OCI-LY7 (cell line): ENCODE measurements at regions of chr7 and their contacts with region 1.

Region 1: DNA sequence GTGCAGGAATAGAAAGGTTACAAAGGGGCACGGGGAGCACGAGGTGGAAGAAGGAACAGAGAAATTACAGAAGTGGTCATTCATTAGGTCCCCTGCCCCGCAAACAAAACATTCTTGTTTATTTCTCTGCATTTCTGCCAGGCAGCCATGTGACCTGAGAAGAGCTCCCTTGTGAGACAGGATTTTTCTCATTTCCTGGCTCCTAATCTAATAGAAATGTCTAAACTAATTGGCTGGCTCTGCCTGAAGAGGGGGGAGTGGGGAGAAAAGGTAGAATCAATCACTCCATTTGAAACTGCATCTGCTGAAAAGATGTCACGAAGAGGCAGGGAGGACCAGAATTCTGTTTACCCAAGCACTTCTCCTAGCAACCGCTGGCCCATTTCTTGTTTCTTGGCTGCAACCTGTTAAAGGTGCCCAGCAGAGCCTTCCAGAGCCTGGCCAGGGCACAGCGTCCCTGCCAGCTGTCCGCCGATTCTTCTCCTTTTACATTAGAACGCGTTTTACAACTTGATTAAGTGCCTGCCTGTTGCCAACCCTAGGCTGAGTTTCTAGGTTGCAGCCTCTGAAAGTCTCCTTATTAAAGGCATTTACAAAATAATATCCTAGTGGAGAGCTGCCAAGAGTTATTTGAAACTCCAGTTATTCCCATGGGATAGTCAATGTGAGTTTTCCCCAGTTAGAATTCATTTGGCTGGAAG is 1227.6 kb downstream of the TYW1 start:
- DNase-seq: no peak
- H3K4me3 ChIP-seq: no peak overlapping the region
- H3K27ac ChIP-seq: no peak overlapping the region
- H3K4me1 ChIP-seq: no peaks in the 10 kb centered on the region
- CTCF ChIP-seq: no peak

Region 2: GRCh38 chr7:67863907-67864306 is 360.3 kb before region 1 on chr7:
- CTCF ChIA-PET with region 1: no interaction called
- POLR2A ChIA-PET with region 1: no interaction called
- intact Hi-C with region 1: no loop called
- DNase-seq: no peak
- H3K4me3 ChIP-seq: no peak overlapping the region
- H3K27ac ChIP-seq: no peak overlapping the region
- H3K4me1 ChIP-seq: no peaks in the 10 kb centered on the region
- CTCF ChIP-seq: no peak

Region 3: GRCh38 chr7:68258609-68259008 is 34.4 kb after region 1 on chr7:
- CTCF ChIA-PET with region 1: no interaction called
- POLR2A ChIA-PET with region 1: no interaction called
- intact Hi-C with region 1: no loop called
- DNase-seq: no peak
- H3K4me3 ChIP-seq: no peak overlapping the region
- H3K27ac ChIP-seq: no peak overlapping the region
- H3K4me1 ChIP-seq: no peaks in the 10 kb centered on the region
- CTCF ChIP-seq: no peak

Region 4: DNA sequence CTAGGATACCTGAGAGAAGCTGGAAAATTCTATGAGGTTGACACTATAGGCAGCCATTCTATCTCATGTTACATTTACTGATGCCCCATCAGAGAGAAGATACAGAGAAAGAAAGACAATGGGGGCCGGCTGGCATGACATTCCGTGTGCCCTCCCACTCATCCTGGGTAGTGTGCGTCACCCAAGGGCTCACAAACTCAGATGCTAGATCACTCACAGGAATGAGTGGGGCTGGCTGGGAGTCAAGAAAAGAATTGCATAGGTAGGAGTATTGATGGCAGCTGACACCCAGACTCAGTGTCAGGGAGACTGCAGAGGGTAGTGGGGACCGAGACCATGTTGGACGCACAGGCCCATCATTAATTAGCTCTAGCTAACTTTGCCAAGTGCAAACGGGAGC is 260.5 kb after region 1 on chr7:
- CTCF ChIA-PET with region 1: no interaction called
- POLR2A ChIA-PET with region 1: no interaction called
- intact Hi-C with region 1: no loop called
- DNase-seq: no peak
- H3K4me3 ChIP-seq: no peak overlapping the region
- H3K27ac ChIP-seq: no peak overlapping the region
- H3K4me1 ChIP-seq: no peaks in the 10 kb centered on the region
- CTCF ChIP-seq: no peak

Region 5: DNA sequence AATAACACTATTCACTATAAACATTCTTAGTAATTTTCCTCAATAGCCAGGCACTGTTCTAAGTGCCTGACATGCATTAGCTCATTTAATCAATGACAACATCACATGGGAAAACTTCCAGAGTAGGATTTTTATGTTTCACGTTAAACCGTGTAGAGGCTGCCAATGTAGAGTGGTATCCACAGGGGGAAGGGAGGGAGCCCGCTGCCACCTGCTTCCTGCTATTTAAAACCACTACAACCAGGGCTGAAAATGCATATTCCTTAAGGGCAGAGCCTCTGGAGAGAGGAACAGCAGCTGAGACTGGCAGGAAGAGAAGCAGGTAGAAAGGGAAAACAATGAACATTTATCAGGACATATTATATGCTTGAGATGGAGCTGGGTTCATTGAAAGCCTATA is 689.8 kb after region 1 on chr7:
- CTCF ChIA-PET with region 1: no interaction called
- POLR2A ChIA-PET with region 1: interaction called, 10 read pairs
- intact Hi-C with region 1: no loop called
- DNase-seq: no peak
- H3K4me3 ChIP-seq: no peak overlapping the region
- H3K27ac ChIP-seq: no peak overlapping the region
- H3K4me1 ChIP-seq: no peaks in the 10 kb centered on the region
- CTCF ChIP-seq: no peak

Region 6: GRCh38 chr7:69430384-69431021 is 1206.3 kb after region 1 on chr7:
- CTCF ChIA-PET with region 1: no interaction called
- POLR2A ChIA-PET with region 1: no interaction called
- intact Hi-C with region 1: no loop called
- DNase-seq: peak; percentile 22
- H3K4me3 ChIP-seq: no peak overlapping the region
- H3K27ac ChIP-seq: no peak overlapping the region
- H3K4me1 ChIP-seq: peaks cover 31% of the 10 kb centered on the region
- CTCF ChIP-seq: no peak